ENCODE measurements at regions of chr19 and their contacts with region 1.

Region 1: GRCh38 chr19:49640113-49640898 is at the start of gene RRAS:
- DNase-seq: peak; percentile 100
- H3K4me3 ChIP-seq: peak within 1 kb of the TSS; percentile 69 to 97 (median 83)
- H3K27ac ChIP-seq: peak within 1 kb of the TSS; percentile 98 to 100 (median 98)
- H3K4me1 ChIP-seq: peaks cover 59 to 80% (median 79%) of the 10 kb centered on the region in 4 donors
- H3K27me3 ChIP-seq: no peaks in the 10 kb centered on the region
- CTCF ChIP-seq: no peak
- EP300 ChIP-seq: peak; percentile 53
- POLR2A ChIP-seq: no peak
- total RNA-seq, gene RRAS: 134 to 205 (median 187) TPM

Region 2: GRCh38 chr19:49590071-49590970 is 50.0 kb before region 1 on chr19:
- intact Hi-C with region 1: loop called (anchors 2 kb)
- DNase-seq: peak; percentile 99
- H3K4me3 ChIP-seq: peak overlapping the region; percentile 85 to 96 (median 92)
- H3K27ac ChIP-seq: peak overlapping the region; percentile 84 to 96 (median 94)
- H3K4me1 ChIP-seq: peaks cover 22 to 44% (median 40%) of the 10 kb centered on the region in 4 donors
- H3K27me3 ChIP-seq: no peaks in the 10 kb centered on the region
- CTCF ChIP-seq: peak in 1 of 3 experiments; percentile 16
- EP300 ChIP-seq: no peak
- POLR2A ChIP-seq: no peak

Region 3: DNA sequence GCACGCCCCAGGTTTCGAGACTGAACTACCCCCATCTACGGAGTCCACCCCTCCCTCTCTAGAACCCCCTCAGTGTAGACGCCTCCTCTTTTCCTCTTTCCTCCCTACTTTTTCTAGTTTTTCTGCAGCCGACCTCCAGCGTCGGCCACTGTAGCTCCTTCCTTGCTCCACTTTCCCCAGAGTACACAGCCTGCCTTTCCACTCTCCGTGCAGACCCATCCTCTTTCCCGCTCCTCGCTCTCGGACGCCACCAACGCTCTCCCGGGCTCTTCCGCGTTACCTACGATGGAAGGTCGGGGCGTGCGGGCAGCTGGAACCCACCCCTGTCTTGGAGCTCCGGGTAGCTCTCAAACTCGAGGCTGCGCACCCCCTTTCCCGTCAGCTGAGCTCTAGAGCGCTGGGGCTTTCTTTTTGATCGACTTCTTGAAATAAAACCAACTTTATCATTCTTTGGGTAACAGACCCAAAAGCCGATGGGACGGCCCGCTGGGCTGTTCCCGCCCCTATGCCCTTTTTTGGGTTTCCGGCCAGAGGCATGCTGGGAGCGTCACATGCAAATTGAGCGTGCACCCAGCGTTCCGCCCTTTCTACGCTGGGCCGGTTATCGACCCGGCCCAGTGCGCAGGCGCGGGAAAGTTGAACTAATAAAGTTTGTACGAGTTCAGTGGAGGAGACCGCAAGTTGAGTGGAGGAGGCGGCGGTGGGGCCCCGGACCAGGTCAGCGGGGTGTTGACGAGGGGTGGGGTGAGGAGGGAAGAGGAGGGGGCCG is 25.2 kb after region 1 on chr19 and contains the starts of genes BCL2L12 and IRF3:
- intact Hi-C with region 1: loop called (anchors 2 kb)
- DNase-seq: peak; percentile 99
- H3K4me3 ChIP-seq: peak within 1 kb of the TSS; percentile 59 to 71 (median 68)
- H3K27ac ChIP-seq: peak within 1 kb of the TSS; percentile 86 to 91 (median 89)
- H3K4me1 ChIP-seq: peaks cover 18 to 37% (median 26%) of the 10 kb centered on the region in 4 donors
- H3K27me3 ChIP-seq: no peaks in the 10 kb centered on the region
- CTCF ChIP-seq: peak in 1 of 3 experiments; percentile 41
- EP300 ChIP-seq: no peak
- POLR2A ChIP-seq: peak; percentile 65
- total RNA-seq, gene BCL2L12: 4.2 to 9.9 (median 6.0) TPM
- total RNA-seq, gene IRF3: 38.8 to 61.7 (median 56.7) TPM

Region 4: DNA sequence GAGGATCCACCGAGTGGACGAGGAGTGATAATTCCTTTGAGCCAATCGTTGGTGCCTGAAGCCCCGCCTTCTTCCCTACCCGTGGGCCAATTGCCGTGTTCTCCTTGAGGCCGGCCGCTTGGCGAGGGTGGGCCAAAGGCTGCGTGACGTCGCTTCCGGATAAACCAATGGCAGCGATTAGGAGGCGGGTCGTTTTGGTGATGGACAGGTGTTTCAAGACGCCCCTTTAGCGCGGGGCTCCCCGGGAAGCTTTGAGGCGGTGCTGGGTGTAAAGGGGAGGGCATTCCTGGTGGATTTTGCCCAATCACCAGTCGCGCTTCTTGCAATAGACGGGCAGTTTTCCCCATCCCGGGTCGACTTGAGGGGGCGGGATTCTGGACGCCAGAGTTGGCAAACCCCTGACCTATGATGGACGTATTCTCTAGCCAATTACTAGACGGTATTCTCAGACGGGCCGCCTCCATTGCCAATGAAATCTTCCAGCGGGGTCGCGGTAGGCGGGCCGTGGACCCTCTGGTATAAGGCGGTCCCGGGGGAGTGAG is 36.5 kb after region 1 on chr19:
- intact Hi-C with region 1: loop called (anchors 5 kb)
- DNase-seq: peak; percentile 100
- H3K4me3 ChIP-seq: peak overlapping the region; percentile 76 to 99 (median 86)
- H3K27ac ChIP-seq: peak overlapping the region; percentile 88 to 97 (median 94)
- H3K4me1 ChIP-seq: peaks cover 45 to 64% (median 57%) of the 10 kb centered on the region in 4 donors
- H3K27me3 ChIP-seq: no peaks in the 10 kb centered on the region
- CTCF ChIP-seq: peak in 1 of 3 experiments; percentile 13
- EP300 ChIP-seq: no peak
- POLR2A ChIP-seq: no peak